AG04450 (cell line): ENCODE measurements at regions of chr1 and their contacts with region 1.

Region 1: GRCh38 chr1:171313835-171314320 is at the start of gene FMO4:
- DNase-seq: peak; percentile 97
- H3K4me3 ChIP-seq: peak within 1 kb of the TSS; percentile 27; the same call in 1 of the 2 replicates
- H3K27ac ChIP-seq: no peak within 1 kb of the TSS
- H3K27me3 ChIP-seq: no peaks in the 10 kb centered on the region
- CTCF ChIP-seq: peak; percentile 78
- polyA plus RNA-seq, gene FMO4: 0.46 and 1.2 TPM in 2 replicates

Region 2: GRCh38 chr1:171081314-171081753 is 232.5 kb before region 1 on chr1:
- CTCF ChIA-PET with region 1: interaction called, 52 read pairs
- POLR2A ChIA-PET with region 1: interaction called, 3 read pairs
- DNase-seq: peak; percentile 33
- H3K4me3 ChIP-seq: no peak overlapping the region
- H3K27ac ChIP-seq: no peak overlapping the region
- H3K27me3 ChIP-seq: no peaks in the 10 kb centered on the region
- CTCF ChIP-seq: peak; percentile 55

Region 3: DNA sequence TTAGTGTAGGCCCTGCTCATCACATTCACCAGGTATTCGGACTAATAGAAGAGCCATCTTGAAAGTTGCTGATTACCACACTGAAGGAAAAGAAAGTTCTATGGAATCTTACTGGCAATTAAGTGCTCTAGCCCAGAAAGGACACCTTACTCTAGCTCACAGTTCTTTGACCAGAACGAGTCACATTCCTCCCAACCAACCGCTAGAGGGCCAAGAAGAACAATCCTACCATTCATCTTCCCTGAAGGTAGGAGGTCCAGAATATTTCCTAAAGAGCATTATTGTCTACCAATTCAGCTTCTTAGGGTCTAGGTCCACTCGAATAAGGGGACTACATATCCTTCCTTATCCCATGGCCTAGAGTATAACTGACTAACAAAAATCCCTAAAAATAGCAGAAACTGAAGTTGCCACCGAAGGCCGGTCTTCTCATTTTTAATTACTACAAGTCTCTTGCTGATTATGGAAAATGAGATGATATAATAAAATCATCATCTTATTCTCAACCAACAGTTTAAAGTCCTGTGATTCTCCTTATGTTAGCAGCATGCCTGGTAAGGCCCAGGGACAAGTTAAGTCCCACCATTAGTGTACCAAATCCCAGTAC is 68.3 kb before region 1 on chr1:
- CTCF ChIA-PET with region 1: interaction called, 42 read pairs
- POLR2A ChIA-PET with region 1: no interaction called
- DNase-seq: no peak
- H3K4me3 ChIP-seq: no peak overlapping the region
- H3K27ac ChIP-seq: no peak overlapping the region
- H3K27me3 ChIP-seq: no peaks in the 10 kb centered on the region
- CTCF ChIP-seq: peak; percentile 82

Region 4: GRCh38 chr1:171286032-171286705 is 27.7 kb before region 1 on chr1:
- CTCF ChIA-PET with region 1: interaction called, 14 read pairs
- POLR2A ChIA-PET with region 1: no interaction called
- DNase-seq: no peak
- H3K4me3 ChIP-seq: no peak overlapping the region
- H3K27ac ChIP-seq: no peak overlapping the region
- H3K27me3 ChIP-seq: no peaks in the 10 kb centered on the region
- CTCF ChIP-seq: no peak

Region 5: DNA sequence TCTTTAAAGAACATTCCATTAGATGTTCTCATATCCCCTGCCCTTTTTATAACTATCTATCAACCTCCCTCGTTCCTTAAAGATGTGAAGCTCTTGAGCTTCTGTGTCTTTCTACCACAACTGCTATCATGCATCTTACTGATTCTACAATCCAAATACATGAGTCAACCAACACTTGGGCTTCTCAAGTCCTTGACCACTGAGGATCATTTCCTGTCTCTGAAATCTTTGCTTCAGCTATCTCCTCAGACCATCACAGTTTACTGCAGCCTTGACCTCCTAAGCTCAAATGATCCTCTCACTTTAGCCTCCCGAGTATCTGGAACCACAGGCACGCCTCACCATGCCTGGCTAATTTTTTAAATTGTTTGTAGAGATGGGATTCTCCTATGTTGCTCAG is 75.3 kb after region 1 on chr1:
- CTCF ChIA-PET with region 1: no interaction called
- POLR2A ChIA-PET with region 1: no interaction called
- DNase-seq: no peak
- H3K4me3 ChIP-seq: no peak overlapping the region
- H3K27ac ChIP-seq: no peak overlapping the region
- H3K27me3 ChIP-seq: no peaks in the 10 kb centered on the region
- CTCF ChIP-seq: no peak

Region 6: DNA sequence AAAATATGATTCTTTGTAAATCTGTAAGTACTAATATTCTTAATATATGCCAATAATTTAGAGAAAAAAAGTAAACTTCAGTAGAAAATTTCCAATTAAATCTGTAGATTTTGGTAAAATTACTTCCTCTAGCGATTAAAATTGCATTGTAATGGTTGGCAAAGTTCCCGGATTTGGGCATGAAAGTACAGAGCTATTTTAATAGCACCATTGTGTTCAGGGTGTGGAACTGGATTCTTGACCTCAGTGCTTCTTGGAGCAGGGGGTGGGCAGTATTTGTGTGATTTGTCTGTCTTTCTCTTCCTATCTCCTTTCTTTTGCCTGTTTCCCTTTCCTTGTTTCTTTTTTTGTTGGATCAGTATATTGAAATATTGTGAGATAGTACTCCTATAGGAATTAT is 599.5 kb after region 1 on chr1:
- CTCF ChIA-PET with region 1: no interaction called
- POLR2A ChIA-PET with region 1: no interaction called
- DNase-seq: no peak
- H3K4me3 ChIP-seq: no peak overlapping the region
- H3K27ac ChIP-seq: no peak overlapping the region
- H3K27me3 ChIP-seq: no peaks in the 10 kb centered on the region
- CTCF ChIP-seq: no peak